ENCODE measurements at regions of chr7 and their contacts with region 1.

Region 1: DNA sequence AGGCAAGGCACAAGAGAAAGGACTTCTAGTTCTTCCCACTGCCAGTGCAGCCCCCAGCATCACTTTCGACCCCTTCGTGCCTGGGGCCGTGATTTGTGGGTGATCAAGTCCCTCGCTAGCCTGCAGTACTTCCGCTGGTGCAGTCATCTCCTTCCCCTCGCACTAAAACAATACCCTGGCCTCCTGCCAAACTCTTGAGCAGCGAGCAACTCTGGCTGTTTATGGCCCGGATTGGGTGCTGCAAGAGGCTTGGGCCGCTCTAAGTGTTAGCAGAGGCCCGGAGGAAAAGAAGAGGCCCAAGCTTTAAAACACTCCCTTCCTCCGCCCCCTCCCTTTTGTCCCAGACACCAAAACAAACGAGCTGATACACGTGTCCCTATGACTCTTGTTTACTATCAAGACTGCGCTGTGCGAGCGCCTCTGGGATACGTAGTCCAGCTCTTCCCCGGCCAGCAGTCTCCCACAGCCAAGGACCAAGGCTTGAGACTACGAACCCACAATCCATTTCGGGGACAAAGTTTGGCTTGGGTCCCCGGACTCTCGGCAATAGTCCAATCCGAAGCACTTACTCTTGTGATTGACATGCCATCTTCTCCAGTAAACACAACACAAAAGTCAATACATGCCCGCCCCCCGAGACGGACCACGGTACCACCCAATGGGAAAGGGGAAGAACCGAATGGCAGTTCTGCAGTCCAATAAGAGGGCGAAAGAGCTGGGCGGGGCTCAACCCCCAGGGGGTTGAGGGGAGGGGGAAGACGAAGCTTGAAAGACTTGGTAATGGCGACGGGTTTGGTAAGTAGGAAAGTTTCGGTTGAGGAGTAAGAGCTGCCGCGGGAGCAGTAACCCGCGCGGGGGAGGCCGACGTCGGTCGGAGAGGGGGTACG is at the start of gene HBP1:
- DNase-seq: peak; percentile 97
- H3K4me3 Mint-ChIP-seq: peak within 1 kb of the TSS; percentile 88
- H3K27ac Mint-ChIP-seq: peak within 1 kb of the TSS; percentile 97
- H3K4me1 Mint-ChIP-seq: peaks cover 26% of the 10 kb centered on the region
- H3K27me3 Mint-ChIP-seq: peaks cover 10% of the 10 kb centered on the region
- total RNA-seq, gene HBP1: 15.2 and 16.6 TPM in 2 replicates

Region 2: DNA sequence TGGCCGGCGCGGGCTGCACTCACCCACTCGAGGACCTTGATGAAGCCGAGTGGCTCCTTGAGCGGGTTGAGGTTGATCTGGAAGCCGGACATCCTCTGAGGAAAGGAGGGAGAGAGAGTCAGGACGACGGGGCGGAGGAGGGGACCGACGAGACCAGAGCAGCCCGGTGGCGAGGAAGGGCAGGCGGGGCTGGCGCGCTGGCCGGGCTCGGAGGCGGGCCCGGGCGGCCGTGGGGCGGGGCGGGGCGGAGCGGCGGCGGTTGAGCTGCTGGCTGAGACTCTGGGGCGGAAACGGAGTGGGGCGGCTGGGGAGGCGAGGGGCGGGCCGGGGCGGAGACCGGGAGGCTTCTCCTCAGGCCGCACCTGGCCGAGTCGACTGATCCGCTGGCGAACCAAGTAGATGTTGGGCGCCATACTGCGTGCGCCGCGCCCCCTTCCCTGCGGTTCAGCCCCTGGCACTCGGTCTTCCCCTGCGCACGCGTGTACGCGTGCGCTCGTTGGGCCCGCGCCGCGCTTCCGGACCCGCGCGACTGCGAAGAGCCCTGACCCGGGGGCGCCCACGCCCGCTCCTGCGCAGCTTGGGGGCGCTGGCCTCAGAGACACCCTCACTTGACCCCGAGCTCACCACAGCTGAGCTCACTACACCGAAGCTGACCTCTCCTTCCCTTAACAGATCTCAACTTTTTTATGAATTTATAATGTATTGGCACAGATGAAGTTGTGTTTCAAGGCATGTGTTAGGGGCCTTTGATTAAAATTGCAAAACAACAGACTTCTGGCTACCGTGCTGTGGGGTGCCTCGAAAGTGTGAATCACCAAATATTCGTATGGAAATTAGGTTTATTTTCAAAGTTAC is 1056.1 kb before region 1 on chr7 and contains the start of gene SYPL1:
- intact Hi-C with region 1: loop called (anchors 2 kb)
- DNase-seq: peak; percentile 86
- H3K4me3 Mint-ChIP-seq: peak within 1 kb of the TSS; percentile 86
- H3K27ac Mint-ChIP-seq: peak within 1 kb of the TSS; percentile 88
- H3K4me1 Mint-ChIP-seq: peaks cover 47% of the 10 kb centered on the region
- H3K27me3 Mint-ChIP-seq: no peaks in the 10 kb centered on the region
- total RNA-seq, gene SYPL1: 22.3 and 24.9 TPM in 2 replicates

Region 3: GRCh38 chr7:106659963-106660861 is 508.3 kb before region 1 on chr7:
- intact Hi-C with region 1: loop called (anchors 1 kb)
- DNase-seq: peak; percentile 73
- H3K4me3 Mint-ChIP-seq: peak overlapping the region; percentile 94
- H3K27ac Mint-ChIP-seq: peak overlapping the region; percentile 92
- H3K4me1 Mint-ChIP-seq: peaks cover 32% of the 10 kb centered on the region
- H3K27me3 Mint-ChIP-seq: peaks cover 3% of the 10 kb centered on the region

Region 4: DNA sequence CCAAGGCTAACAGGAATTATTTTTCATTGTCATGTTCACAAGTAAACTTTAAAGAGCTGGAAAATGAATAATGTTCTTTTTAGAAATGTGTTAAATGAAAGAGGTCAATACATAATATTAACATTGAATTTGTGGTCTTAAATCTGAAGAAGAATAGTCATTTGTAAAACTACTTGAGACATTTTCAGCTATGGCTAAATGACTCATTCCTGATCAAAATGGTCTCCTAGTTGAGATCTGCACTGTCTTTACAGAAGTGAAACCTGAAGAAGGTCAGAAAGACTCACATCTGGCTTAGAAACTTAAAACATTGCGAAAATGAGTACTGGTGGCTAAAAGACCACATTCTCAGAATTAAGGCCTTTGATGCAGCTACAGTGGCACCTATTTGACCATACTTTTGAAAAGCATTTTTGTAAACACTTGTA is 297.5 kb before region 1 on chr7:
- intact Hi-C with region 1: loop called (anchors 1 kb)
- DNase-seq: no peak
- H3K4me3 Mint-ChIP-seq: peak overlapping the region; percentile 43
- H3K27ac Mint-ChIP-seq: peak overlapping the region; percentile 64
- H3K4me1 Mint-ChIP-seq: peaks cover 75% of the 10 kb centered on the region
- H3K27me3 Mint-ChIP-seq: no peaks in the 10 kb centered on the region

Region 5: GRCh38 chr7:107150375-107151073 is 18.0 kb before region 1 on chr7:
- intact Hi-C with region 1: loop called (anchors 1 kb)
- DNase-seq: peak; percentile 57
- H3K4me3 Mint-ChIP-seq: no peak overlapping the region
- H3K27ac Mint-ChIP-seq: no peak overlapping the region
- H3K4me1 Mint-ChIP-seq: no peaks in the 10 kb centered on the region
- H3K27me3 Mint-ChIP-seq: peaks cover 5% of the 10 kb centered on the region

Region 6: GRCh38 chr7:107232568-107233090 is 64.2 kb after region 1 on chr7:
- intact Hi-C with region 1: no loop called
- DNase-seq: no peak
- H3K4me3 Mint-ChIP-seq: no peak overlapping the region
- H3K27ac Mint-ChIP-seq: no peak overlapping the region
- H3K4me1 Mint-ChIP-seq: no peaks in the 10 kb centered on the region
- H3K27me3 Mint-ChIP-seq: no peaks in the 10 kb centered on the region

Region 7: DNA sequence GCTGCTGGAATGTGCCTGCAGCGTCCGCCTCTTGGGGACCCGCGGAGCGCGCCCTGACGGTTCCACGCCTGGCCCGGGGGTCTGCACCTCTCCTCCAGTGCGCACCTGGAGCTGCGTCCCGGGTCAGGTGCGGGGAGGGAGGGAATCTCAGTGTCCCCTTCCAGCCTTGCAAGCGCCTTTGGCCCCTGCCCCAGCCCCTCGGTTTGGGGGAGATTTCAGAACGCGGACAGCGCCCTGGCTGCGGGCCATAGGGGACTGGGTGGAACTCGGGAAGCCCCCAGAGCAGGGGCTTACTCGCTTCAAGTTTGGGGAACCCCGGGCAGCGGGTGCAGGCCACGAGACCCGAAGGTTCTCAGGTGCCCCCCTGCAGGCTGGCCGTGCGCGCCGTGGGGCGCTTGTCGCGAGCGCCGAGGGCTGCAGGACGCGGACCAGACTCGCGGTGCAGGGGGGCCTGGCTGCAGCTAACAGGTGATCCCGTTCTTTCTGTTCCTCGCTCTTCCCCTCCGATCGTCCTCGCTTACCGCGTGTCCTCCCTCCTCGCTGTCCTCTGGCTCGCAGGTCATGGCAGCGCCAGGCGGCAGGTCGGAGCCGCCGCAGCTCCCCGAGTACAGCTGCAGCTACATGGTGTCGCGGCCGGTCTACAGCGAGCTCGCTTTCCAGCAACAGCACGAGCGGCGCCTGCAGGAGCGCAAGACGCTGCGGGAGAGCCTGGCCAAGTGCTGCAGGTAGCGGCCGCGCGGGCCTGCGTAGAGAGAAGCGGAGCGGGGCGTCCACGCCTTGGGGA is 492.8 kb after region 1 on chr7:
- intact Hi-C with region 1: loop called (anchors 1 kb)
- DNase-seq: peak; percentile 55
- H3K4me3 Mint-ChIP-seq: peak overlapping the region; percentile 96
- H3K27ac Mint-ChIP-seq: peak overlapping the region; percentile 92
- H3K4me1 Mint-ChIP-seq: peaks cover 40% of the 10 kb centered on the region
- H3K27me3 Mint-ChIP-seq: peaks cover 3% of the 10 kb centered on the region

Region 8: DNA sequence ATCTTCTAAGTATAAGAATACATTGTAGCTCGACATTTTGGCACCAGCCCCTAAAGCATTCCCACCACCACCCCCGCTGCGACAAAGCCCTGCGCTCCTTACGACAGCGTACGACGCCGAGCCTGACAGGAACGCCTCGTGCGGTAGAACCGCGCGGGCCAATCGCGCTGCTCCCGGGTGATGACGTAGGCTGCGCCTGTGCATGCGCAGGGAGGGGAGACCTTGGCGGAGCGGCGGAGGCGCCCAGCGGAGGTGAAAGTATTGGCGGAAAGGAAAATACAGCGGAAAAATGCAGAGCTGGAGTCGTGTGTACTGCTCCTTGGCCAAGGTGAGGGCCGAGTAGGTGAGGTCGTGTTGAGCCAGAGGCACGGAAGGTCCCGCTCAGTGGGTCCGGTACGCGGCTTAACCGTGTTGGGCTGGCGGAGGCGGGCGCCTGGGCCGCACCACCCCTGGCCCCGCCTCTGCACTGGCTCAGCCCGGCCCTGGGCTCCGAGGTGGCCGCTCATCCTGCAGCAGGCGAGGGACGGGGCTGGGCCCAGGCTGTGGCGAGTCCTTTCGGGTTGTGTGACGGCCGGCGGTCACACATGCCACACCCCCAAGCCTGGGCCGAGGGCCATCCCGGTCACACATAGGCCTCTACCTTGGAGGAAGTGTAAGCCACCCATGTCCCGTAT is 722.6 kb after region 1 on chr7 and contains the start of gene DLD:
- intact Hi-C with region 1: loop called (anchors 1 kb)
- DNase-seq: peak; percentile 93
- H3K4me3 Mint-ChIP-seq: peak within 1 kb of the TSS; percentile 100
- H3K27ac Mint-ChIP-seq: peak within 1 kb of the TSS; percentile 100
- H3K4me1 Mint-ChIP-seq: peaks cover 49% of the 10 kb centered on the region
- H3K27me3 Mint-ChIP-seq: peaks cover 3% of the 10 kb centered on the region
- total RNA-seq, gene DLD: 98.6 and 114 TPM in 2 replicates

Measured in activated T-helper 1 cell treated with anti-CD3 and anti-CD28 coated beads, Interleukin-12 subunit alpha, Interleukin-12 subunit beta, Interleukin-2, Interleukin-4 antibody, amounts not matched to agents 30 ng/mL and 10 ng/mL and 1 ng/mL, durations not matched to agents 14 hours and 24 hours and 36 hours (primary cell).